ENCODE measurements at regions of chr4 and their contacts with region 1.

Region 1: GRCh38 chr4:159946983-159947615 is 844.2 kb downstream of the RAPGEF2 start:
- DNase-seq: peak in 1 of 2 experiments; percentile 35
- H3K4me3 ChIP-seq: no peak overlapping the region
- H3K27ac ChIP-seq: no peak overlapping the region
- H3K4me1 ChIP-seq: no peaks in the 10 kb centered on the region
- H3K27me3 ChIP-seq: no peaks in the 10 kb centered on the region
- CTCF ChIP-seq: peak; percentile 77

Region 2: GRCh38 chr4:160194716-160195115 is 247.6 kb after region 1 on chr4:
- CTCF ChIA-PET with region 1: no interaction called
- POLR2A ChIA-PET with region 1: no interaction called
- intact Hi-C with region 1: loop called (anchors 5 kb)
- DNase-seq: no peak
- H3K4me3 ChIP-seq: no peak overlapping the region
- H3K27ac ChIP-seq: no peak overlapping the region
- H3K4me1 ChIP-seq: no peaks in the 10 kb centered on the region
- H3K27me3 ChIP-seq: no peaks in the 10 kb centered on the region
- CTCF ChIP-seq: no peak

Region 3: DNA sequence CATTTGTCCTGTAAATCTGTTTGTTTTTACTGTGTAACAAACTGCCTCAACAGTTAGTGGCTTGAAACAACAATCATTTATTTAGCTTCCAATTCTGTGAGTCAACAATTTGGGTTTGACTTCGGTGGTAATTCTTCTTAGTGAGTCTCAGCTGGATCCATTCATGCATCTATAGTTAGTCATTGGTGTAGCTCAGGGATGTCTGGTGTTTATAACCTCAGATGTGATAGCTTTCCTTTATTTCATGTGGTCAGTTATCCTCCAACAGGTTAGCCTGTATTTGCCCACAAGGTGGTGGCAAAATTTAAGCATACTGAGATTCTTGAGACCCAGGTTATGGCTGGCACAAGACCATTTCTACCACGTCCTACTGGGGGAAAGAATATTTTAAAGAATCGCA is 423.0 kb after region 1 on chr4:
- CTCF ChIA-PET with region 1: no interaction called
- POLR2A ChIA-PET with region 1: no interaction called
- intact Hi-C with region 1: loop called (anchors 5 kb)
- DNase-seq: peak in 1 of 2 experiments; percentile 34
- H3K4me3 ChIP-seq: no peak overlapping the region
- H3K27ac ChIP-seq: no peak overlapping the region
- H3K4me1 ChIP-seq: peaks cover 7% of the 10 kb centered on the region
- H3K27me3 ChIP-seq: no peaks in the 10 kb centered on the region
- CTCF ChIP-seq: no peak

Measured in PC-9 (cell line).